CD4-positive, alpha-beta memory T cell (primary cell): ENCODE measurements at regions of chr12 and their contacts with region 1.

Region 1: DNA sequence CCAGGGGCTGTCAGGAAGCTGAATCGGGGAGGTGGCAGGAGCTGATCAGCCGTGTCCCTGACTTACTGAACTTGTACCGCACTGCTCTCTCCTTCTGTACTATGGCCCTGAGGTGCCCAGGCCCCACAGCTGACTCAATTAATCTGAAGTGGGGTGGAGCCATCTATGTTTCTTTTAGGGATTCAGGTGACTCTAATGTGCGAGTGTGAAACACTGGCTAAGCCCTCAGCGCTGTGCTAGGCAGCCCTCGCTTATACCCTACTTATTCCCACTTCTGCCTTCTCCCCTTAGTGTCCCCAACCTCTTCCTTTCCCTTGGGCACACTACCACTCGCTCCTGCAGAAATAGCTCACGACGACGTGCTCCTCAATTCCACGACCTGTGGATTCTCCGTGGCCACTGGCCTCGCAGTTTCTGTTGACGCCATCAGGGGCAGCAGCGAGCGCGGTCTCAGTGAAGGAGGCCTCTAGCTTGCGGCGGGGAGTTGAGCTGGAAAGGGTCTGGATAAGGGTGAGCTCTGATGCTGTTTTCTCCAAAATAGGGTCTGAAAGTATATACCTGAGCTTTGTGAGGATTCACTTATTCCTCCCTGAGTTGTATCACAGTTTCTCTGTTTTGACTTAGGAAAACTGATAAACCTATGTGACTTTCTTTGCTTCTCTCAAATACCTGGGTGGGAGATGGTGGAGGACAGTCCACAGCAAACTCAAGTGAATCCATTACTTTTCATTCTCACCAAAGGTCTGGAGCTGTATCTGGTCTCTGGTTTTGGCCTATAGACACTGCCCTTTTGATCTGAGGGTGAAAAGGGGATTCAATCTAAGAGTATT is 167.6 kb downstream of the SLC41A2 start:
- DNase-seq: peak in 4 of 5 donors; percentile 16 to 30 (median 27)
- H3K4me3 ChIP-seq: no peak overlapping the region
- H3K4me3 Mint-ChIP-seq: peak overlapping the region in 4 of 8 donors; percentile 40 to 58 (median 50)
- H3K27ac ChIP-seq: no peak overlapping the region
- H3K27ac Mint-ChIP-seq: peak overlapping the region in 2 of 7 donors; percentile 58 to 63
- H3K4me1 ChIP-seq: peaks cover 5% of the 10 kb centered on the region
- H3K4me1 Mint-ChIP-seq: peaks cover 1 to 6% (median 4%) of the 10 kb centered on the region in 4 donors
- H3K27me3 ChIP-seq: no peaks in the 10 kb centered on the region
- H3K27me3 Mint-ChIP-seq: no peaks in the 10 kb centered on the region

Region 2: GRCh38 chr12:104805186-104805585 is 14.7 kb after region 1 on chr12:
- CTCF ChIA-PET with region 1: interaction called, 11 read pairs
- POLR2A ChIA-PET with region 1: no interaction called
- intact Hi-C with region 1: no loop called
- DNase-seq: no peak
- H3K4me3 ChIP-seq: no peak overlapping the region
- H3K4me3 Mint-ChIP-seq: no peak overlapping the region
- H3K27ac ChIP-seq: no peak overlapping the region
- H3K27ac Mint-ChIP-seq: no peak overlapping the region
- H3K4me1 ChIP-seq: no peaks in the 10 kb centered on the region
- H3K4me1 Mint-ChIP-seq: no peaks in the 10 kb centered on the region
- H3K27me3 ChIP-seq: no peaks in the 10 kb centered on the region
- H3K27me3 Mint-ChIP-seq: peaks cover 0 to 1% of the 10 kb centered on the region in 2 donors